Breast epithelium (tissue), 4 donors: ENCODE measurements at regions of chr11 and their contacts with region 1.

Region 1: GRCh38 chr11:101323997-101324396 is 194.4 kb upstream of the PGR start:
- DNase-seq: no peak
- H3K4me3 ChIP-seq: no peak overlapping the region
- H3K27ac ChIP-seq: no peak overlapping the region
- H3K4me1 ChIP-seq: no peaks in the 10 kb centered on the region
- H3K27me3 ChIP-seq: no peaks in the 10 kb centered on the region
- CTCF ChIP-seq: no peak
- POLR2A ChIP-seq: no peak

Region 2: DNA sequence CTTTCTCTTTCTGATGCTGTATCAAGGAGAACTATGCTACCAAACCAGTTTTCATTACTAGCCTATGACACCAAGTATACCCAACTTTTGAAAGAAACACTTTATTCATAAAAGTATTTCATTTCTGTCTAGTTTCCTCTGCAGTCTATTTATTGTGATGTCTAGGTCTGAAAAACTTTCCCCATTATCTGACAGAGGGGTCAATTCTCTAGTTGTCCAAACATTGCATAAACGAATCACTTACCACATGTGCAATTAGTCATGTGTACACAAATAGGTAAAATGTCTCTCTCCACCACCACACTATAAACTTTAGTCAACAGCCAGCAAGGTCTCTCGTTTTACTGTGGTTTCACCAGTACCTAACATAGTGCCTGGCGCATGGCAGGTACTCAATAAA is 202.6 kb before region 1 on chr11:
- intact Hi-C with region 1: loop called (anchors 5 kb)
- DNase-seq: no peak
- H3K4me3 ChIP-seq: no peak overlapping the region
- H3K27ac ChIP-seq: no peak overlapping the region
- H3K4me1 ChIP-seq: no peaks in the 10 kb centered on the region
- H3K27me3 ChIP-seq: no peaks in the 10 kb centered on the region
- CTCF ChIP-seq: no peak
- POLR2A ChIP-seq: no peak